Calu3 (cell line): ENCODE measurements at regions of chr3 and their contacts with region 1.

Region 1: GRCh38 chr3:123298903-123299302 is 97.2 kb downstream of the SEC22A start:
- DNase-seq: no peak
- H3K4me3 Mint-ChIP-seq: no peak overlapping the region
- H3K27ac Mint-ChIP-seq: peak overlapping the region; percentile 56
- H3K4me1 Mint-ChIP-seq: peaks cover 12% of the 10 kb centered on the region
- H3K27me3 Mint-ChIP-seq: peaks cover 40% of the 10 kb centered on the region
- CTCF ChIP-seq: no peak

Region 2: DNA sequence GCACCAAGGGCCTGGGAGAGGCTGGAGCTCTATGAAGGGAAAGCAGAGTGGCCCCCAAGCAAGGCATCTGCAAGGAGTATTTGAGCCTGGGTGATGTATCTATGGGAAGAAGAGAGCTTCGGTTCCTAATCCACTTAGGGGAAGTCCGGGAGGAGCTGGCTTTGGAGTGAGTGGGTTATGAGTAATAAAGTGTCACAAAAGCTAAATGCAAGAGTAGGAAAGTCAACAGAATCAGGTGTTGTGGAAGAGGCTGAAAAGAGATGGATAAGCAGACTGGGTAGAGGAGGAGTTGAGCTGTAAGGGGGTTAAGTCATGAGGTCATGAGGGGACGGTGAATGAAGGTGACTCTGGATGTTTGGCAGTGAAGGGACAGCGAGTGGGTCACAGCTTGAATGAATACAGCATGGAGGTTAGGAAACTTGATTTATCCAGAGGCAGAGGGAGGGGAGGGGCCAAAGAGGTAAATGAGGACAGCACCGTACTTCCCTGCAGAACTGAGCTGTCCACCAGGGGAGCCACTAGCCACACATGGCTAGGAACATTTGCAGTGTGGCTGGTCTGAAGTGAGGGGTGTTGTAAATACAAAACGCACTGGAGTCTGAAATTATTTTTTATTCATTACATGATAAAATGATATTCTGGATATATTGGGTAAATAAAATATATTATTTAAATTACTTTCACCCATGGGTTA is 66.7 kb after region 1 on chr3:
- CTCF ChIA-PET with region 1: no interaction called
- intact Hi-C with region 1: no loop called
- DNase-seq: peak; percentile 26
- H3K4me3 Mint-ChIP-seq: no peak overlapping the region
- H3K27ac Mint-ChIP-seq: no peak overlapping the region
- H3K4me1 Mint-ChIP-seq: no peaks in the 10 kb centered on the region
- H3K27me3 Mint-ChIP-seq: peaks cover 29% of the 10 kb centered on the region
- CTCF ChIP-seq: peak; percentile 17

Region 3: GRCh38 chr3:123410149-123410515 is 111.2 kb after region 1 on chr3:
- CTCF ChIA-PET with region 1: interaction called, 12 read pairs
- intact Hi-C with region 1: no loop called
- DNase-seq: no peak
- H3K4me3 Mint-ChIP-seq: no peak overlapping the region
- H3K27ac Mint-ChIP-seq: peak overlapping the region; percentile 36
- H3K4me1 Mint-ChIP-seq: peaks cover 26% of the 10 kb centered on the region
- H3K27me3 Mint-ChIP-seq: no peaks in the 10 kb centered on the region
- CTCF ChIP-seq: no peak